ENCODE measurements at regions of chr12 and their contacts with region 1.

Region 1: GRCh38 chr12:9647825-9648700 is 21.4 kb upstream of the CLEC2D start:
- DNase-seq: peak; percentile 88
- H3K4me3 ChIP-seq: peak overlapping the region; percentile 82
- H3K27ac ChIP-seq: peak overlapping the region; percentile 94
- H3K4me1 ChIP-seq: peaks cover 35% of the 10 kb centered on the region
- H3K27me3 ChIP-seq: no peaks in the 10 kb centered on the region

Region 2: DNA sequence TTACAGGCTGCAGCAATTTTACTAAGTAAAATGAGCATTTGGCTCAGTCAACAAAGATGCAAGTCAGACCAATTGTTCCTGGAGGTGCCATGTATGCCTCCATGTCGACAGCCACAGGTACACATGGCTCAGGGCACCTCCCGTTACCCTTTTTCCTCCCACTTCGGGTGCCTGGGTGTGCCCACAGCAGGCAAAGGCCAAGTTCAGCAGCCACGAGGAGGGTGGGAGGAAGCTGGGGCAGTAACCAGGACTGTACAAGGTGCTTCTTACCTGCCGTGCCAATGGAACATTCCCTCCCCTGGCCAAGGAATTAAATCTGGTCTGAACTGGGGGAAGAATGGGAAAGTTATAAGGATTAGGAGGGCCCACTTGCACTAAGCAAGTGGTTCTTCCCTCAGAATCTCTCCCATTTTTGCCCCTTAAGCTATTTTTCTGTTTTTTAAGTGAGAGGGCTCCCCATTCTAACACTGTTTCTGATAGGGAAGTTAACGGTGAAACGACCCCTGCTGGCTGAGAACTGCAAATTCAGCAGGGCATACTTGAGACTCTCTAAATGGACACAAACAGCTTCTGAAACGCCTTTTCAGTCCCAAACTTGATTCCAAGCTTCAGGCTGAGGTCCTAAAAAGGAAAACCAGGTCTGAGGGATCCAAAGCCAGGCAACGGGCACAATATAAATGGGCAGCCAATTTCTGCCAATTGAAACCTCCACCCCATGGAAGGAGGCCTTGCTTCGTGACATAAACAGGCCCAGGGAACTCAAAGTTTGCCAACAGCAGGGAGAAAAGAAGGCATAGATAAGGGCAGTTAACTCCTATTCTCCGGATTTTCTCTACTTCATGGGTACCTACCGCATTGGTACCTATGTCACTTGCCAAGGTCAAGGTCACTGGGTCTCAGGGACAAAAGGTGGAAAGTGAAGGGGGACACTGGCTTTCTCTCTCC is 60.1 kb after region 1 on chr12:
- in situ Hi-C with region 1: loop called (anchors 5 kb)
- DNase-seq: peak; percentile 69
- H3K4me3 ChIP-seq: no peak overlapping the region
- H3K27ac ChIP-seq: no peak overlapping the region
- H3K4me1 ChIP-seq: peaks cover 9% of the 10 kb centered on the region; the same call in 1 of the 2 replicates
- H3K27me3 ChIP-seq: peaks cover 4% of the 10 kb centered on the region; the same call in 1 of the 2 replicates

Measured in GM23248 (cell line).